ENCODE measurements at regions of chr22 and their contacts with region 1.

Region 1: GRCh38 chr22:31943976-31944699 is at the start of gene YWHAH:
- DNase-seq: peak; percentile 76 to 95
- H3K4me3 ChIP-seq: peak within 1 kb of the TSS; percentile 99
- H3K27ac ChIP-seq: peak within 1 kb of the TSS; percentile 53
- H3K4me1 ChIP-seq: peaks cover 20% of the 10 kb centered on the region
- H3K27me3 ChIP-seq: no peaks in the 10 kb centered on the region
- CTCF ChIP-seq: no peak
- total RNA-seq, gene YWHAH: 131 and 132 TPM in 2 replicates

Region 2: GRCh38 chr22:31378123-31378522 is 566.0 kb before region 1 on chr22:
- CTCF ChIA-PET with region 1: no interaction called
- POLR2A ChIA-PET with region 1: interaction called, 13 read pairs
- intact Hi-C with region 1: no loop called
- DNase-seq: no peak
- H3K4me3 ChIP-seq: no peak overlapping the region
- H3K27ac ChIP-seq: no peak overlapping the region
- H3K4me1 ChIP-seq: no peaks in the 10 kb centered on the region
- H3K27me3 ChIP-seq: no peaks in the 10 kb centered on the region
- CTCF ChIP-seq: no peak